Activated CD8-positive, alpha-beta T cell treated with anti-CD3 and anti-CD28 coated beads for 36 hours (primary cell): ENCODE measurements at regions of chr10 and their contacts with region 1.

Region 1: GRCh38 chr10:62050893-62051433 is 149.5 kb downstream of the ARID5B start:
- DNase-seq: peak; percentile 88
- ATAC-seq: peak; percentile 57
- H3K4me3 Mint-ChIP-seq: peak overlapping the region; percentile 84
- H3K27ac Mint-ChIP-seq: peak overlapping the region; percentile 95
- H3K4me1 Mint-ChIP-seq: peaks cover 96% of the 10 kb centered on the region
- H3K27me3 Mint-ChIP-seq: no peaks in the 10 kb centered on the region
- CTCF ChIP-seq: no peak

Region 2: DNA sequence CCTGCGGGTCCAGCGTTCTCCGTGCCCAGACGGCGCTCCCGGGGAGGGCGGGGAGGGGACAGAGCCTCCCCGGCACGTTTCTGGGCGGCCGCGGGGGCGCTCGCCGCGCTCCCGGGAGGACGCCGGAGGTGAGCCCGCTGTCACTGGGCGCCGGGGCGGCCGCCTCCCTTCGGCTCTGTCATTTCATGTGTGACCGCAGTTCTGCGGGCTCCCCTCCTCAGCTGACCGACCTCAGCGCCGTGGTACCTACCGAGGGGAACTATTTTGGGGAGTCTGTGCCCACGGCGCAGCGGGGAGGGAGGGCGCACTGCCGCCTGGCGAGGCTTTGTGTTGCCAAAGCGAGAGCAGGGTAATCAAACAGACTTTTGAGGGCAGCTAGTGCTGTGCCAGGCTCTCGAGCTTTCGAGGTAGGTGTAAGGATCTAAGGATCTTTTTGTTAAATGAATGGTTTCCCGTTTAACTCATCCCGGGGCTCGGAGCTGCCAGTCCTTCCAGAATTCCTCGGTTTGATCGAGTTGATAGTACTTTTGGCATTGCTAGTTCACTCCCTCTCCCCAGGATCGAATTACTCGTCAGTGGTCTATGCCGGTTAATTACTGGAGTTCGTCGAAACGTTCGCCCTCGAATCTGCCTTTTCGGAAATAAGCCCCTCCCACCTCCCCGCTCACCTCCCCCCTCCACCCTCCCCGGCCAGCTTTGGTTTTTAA is 147.6 kb before region 1 on chr10:
- CTCF ChIA-PET with region 1: interaction called, 13 read pairs
- POLR2A ChIA-PET with region 1: interaction called, 79 read pairs
- intact Hi-C with region 1: loop called (anchors 5 kb)
- DNase-seq: peak; percentile 87
- ATAC-seq: peak; percentile 50
- H3K4me3 Mint-ChIP-seq: peak overlapping the region; percentile 86
- H3K27ac Mint-ChIP-seq: peak overlapping the region; percentile 97
- H3K4me1 Mint-ChIP-seq: peaks cover 38% of the 10 kb centered on the region
- H3K27me3 Mint-ChIP-seq: no peaks in the 10 kb centered on the region
- CTCF ChIP-seq: no peak

Region 3: GRCh38 chr10:61987951-61988379 is 63.0 kb before region 1 on chr10:
- CTCF ChIA-PET with region 1: interaction called, 4 read pairs
- POLR2A ChIA-PET with region 1: interaction called, 13 read pairs
- intact Hi-C with region 1: loop called (anchors 2 kb)
- DNase-seq: peak; percentile 62
- ATAC-seq: peak; percentile 95
- H3K4me3 Mint-ChIP-seq: peak overlapping the region; percentile 58
- H3K27ac Mint-ChIP-seq: peak overlapping the region; percentile 99
- H3K4me1 Mint-ChIP-seq: peaks cover 80% of the 10 kb centered on the region
- H3K27me3 Mint-ChIP-seq: no peaks in the 10 kb centered on the region
- CTCF ChIP-seq: no peak

Region 4: DNA sequence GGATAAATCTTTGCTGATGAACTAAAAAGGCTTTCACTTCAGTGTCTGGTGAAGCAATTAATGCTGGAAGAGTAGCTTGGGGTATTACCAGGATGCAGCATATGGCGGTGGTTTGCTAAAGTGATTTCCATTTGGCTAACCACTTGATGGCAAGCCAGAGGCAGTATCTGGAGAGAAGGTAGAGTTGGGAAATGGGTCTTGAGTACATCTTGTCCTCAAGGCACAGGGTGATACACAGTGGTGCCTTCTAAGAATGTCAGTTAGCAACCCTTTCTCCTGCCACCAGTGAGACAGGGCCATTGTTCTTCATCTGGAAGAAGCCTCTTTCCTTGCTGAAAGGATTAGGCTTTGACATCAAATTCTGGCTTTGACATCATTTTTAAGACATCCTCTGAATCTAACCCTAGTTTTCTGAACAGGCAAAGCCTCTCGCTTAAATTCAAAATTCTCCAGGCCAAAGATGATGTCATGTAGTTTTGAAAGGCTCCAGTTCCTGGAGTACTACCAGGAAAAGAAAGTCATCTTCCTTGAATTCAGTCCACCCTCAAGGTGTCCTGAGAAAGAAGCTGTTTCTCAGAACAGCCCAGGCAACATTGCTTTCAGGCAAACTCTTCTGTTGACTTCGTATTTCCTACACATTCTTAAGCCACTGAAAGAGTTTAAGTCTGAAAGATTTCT is 13.0 kb after region 1 on chr10:
- CTCF ChIA-PET with region 1: interaction called, 16 read pairs
- POLR2A ChIA-PET with region 1: interaction called, 20 read pairs
- intact Hi-C with region 1: no loop called
- DNase-seq: no peak
- ATAC-seq: peak; percentile 71
- H3K4me3 Mint-ChIP-seq: peak overlapping the region; percentile 29
- H3K27ac Mint-ChIP-seq: peak overlapping the region; percentile 86
- H3K4me1 Mint-ChIP-seq: peaks cover 67% of the 10 kb centered on the region
- H3K27me3 Mint-ChIP-seq: no peaks in the 10 kb centered on the region
- CTCF ChIP-seq: no peak

Region 5: DNA sequence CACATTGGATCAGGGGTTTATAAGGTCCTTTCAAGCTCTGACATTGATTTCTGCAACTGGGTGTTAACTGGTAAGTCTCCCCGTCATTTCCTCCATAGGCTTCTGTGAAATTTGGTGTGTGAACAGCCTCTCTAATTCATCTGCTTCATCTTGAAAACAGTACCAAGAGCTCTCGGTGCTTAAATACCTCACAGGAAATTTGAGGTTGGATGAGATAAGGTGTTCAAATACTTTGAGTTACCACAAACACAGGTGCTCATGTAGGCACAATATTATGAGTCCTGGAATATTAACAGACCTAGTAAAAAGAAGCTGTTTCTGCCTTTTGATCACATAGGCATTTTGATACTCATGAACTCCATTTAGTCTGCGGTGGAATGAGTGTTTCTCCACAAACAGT is 132.5 kb after region 1 on chr10:
- CTCF ChIA-PET with region 1: interaction called, 16 read pairs
- POLR2A ChIA-PET with region 1: interaction called, 49 read pairs
- intact Hi-C with region 1: loop called (anchors 1 kb)
- DNase-seq: peak; percentile 63
- ATAC-seq: peak; percentile 64
- H3K4me3 Mint-ChIP-seq: peak overlapping the region; percentile 17
- H3K27ac Mint-ChIP-seq: peak overlapping the region; percentile 99
- H3K4me1 Mint-ChIP-seq: peaks cover 82% of the 10 kb centered on the region
- H3K27me3 Mint-ChIP-seq: no peaks in the 10 kb centered on the region
- CTCF ChIP-seq: no peak